Left cardiac atrium (tissue), 4 donors: ENCODE measurements at regions of chr3 and their contacts with region 1.

Region 1: DNA sequence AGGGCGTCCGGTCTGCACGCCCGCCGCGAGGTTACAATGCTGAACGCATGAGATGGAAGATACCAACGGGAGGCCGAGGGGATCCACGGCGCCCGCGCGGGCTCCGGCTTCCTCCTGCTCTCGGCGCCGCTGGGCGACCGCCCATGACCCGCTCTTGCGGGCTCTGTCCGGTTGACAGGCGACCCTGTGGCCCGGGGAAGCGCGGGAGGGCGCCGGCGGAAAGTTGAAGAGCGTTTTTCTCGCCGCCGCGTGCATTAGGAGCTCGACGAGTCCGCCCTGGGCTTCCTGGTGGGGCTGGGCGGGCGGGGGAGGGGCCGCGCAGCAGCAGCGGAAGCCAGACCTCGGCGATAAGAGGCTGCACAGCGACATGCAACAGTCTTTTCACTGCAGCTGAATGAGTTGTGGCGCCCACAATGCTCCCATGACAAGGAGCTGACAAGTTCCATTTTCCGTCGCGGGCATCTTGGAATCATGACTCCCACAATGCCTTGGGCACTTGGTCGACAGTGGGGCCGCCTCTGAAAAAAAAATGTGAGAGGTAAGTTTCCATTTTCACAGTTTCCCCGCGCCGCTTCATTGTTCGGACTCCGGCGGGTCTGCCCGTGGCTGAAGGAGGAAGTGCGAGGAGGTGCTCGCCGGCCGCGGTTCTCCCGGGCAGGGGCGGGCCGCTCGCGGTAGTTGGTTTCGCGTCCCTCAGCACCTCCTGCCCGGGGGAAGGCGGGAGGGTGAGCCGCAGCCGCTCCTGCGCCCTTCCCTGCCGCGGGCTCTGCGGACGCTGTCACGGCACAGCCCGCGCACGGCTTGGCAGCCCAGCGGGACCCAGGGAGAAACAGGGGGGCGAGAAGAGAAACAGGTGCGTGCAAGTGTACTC is at the start of gene MBNL1:
- DNase-seq: peak; percentile 83
- ATAC-seq: peak; percentile 77 to 82
- total RNA-seq, gene MBNL1: 141 to 154 TPM

Region 2: DNA sequence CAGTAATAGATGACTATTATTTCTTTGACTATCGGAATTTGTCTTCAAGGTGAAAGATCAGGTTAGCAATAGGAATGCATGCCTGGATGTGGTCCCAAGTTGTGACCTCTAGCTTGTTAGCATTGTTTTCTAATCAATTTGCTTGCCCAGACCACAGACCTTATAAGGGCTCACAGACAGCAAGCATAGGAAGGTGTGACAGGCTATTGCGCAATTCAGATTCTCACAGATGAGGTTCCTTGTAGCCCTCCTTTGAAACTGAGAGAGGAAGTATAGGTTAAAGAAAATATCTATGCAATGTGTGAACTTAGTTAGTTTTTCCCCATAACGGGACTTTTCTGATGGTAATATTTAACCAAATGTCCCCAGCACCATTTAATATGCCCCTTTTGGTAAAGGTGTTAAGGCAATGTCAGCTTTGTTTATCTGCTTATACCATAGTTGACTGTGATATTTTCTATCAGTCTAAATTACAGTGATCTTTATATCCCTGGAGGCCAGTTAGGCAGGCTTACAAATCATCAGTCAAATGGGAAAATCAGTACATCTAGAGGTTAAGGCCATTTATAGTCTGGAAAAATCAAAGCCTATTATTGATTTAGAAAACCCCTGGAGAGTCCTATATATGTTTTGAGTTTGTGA is 168.2 kb before region 1 on chr3:
- intact Hi-C with region 1: no loop called
- DNase-seq: no peak
- ATAC-seq: no peak

Region 3: DNA sequence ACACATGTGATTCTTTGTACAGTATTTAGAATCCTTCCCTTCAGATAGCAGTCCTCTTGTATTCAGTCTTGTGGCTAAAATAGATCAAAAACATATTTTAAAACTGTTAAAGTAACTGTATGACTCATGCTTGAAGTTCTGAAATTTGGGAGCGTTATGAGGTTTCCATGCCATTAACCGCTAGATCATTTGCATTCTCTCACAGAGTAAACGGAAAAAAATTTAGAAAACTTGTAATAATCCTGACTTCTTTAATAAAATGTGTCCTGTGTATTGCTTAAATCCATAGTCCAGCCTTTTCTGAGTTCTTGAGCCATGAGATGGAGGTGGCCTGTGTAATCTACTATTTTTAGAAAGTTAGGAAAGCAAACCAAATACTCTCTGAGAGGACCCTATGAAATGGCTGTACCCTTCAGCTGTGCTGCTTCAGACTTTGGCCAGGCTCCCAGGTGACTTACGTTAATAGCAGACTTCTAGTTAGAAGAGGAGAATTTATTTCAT is 33.8 kb after region 1 on chr3:
- intact Hi-C with region 1: loop called in 1 of 2 experiments (anchors 5 kb)
- DNase-seq: peak; percentile 70
- ATAC-seq: peak; percentile 73 to 75

Region 4: DNA sequence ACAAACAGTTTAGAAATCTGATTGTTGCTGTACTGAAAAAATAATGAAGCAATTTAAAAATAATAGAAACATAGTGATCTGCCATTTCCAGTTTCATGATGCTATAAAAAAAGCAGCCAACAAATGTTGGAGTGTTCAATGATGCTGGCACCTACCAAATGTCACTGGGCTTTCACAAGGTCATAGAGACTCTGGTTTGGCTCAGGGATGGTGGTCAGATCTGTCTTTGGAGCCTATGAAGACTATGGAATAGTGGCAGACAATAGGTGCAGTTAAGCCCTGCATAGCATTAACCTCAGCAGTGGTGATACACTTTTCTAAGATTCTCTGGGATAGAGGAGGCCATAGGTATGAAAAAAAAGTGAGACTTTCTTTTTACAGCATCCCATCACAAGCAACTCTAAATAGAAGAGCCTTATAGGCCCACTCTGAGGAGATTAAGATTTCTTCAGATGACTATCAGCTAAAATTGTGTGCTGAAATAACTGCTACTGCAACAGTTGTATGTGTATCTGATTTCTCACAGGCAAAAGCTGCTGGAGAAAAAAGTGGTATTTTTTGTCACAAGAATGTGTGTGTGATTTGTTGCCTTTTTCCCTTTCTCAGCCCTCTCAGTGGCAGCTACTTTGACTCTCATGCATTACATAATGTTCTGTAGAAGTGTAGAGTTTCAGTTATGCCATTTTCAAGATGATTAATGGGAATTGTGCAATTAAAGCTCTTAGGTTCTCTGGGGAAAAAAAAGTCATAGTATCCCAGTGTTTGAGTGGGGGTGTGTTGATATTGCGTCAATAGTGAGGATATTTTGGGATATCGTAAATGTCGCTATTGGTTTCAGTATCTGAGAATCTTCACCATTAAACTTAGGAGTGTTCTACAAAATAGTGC is 137.4 kb after region 1 on chr3:
- intact Hi-C with region 1: loop called in 1 of 2 experiments (anchors 10 kb)
- DNase-seq: no peak
- ATAC-seq: peak; percentile 63 to 72